H1 (cell line): ENCODE measurements at regions of chr5 and their contacts with region 1.

Region 1: DNA sequence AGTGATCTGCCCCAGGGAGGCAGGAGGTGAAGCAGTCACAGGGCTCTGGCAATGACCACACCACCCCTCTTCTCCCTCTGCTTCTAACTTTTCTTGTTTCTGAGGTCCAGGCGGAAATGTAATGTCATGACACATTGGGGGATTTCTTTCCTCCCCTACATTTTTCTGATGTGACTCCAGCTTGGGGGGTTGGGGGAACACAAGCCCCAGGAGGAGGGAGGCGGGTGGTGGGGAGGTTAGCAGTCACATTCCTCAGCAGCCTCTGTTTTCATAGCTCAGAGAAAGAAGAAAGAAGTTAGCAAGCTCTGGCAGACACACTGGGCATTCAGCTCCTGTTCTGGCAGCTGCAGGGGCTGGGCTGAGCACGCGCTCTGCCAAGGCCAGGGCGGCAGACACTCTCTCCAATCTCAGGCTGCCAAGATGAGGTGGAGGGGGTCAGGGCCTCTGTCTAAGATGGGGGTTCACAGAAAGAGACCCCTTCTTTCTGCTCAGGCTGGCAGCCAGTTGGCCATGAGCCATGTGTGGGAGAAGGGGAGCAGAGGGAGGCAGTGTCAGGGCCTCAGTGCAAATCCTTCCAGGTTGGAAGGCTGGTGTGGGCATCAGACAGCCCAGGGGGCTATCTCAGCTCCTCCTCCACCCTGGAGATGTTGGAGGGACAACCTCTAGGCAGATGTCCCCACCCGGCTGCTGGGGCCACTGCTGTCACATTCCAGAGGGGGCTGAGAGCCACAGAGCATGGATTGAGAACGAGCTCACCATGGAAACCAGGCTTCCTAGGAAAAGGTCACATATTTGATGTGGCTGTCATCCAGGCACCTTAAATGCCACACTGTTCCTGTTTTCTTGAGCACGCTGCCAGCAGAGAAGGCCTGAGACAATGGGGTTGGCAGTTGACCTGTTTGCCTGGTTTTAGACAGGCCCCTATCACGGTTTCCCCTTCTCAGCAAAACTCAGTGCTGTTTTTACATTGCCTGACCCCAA is 20.1 kb upstream of the PFDN1 start:
- DNase-seq: no peak
- H3K4me3 ChIP-seq: no peak overlapping the region
- H3K27ac ChIP-seq: no peak overlapping the region
- H3K4me1 ChIP-seq: peaks cover 0 to 5% (median 0%) of the 10 kb centered on the region in 4 experiments; a peak in 3 of 7 replicates
- H3K27me3 ChIP-seq: no peaks in the 10 kb centered on the region
- CTCF ChIP-seq: no peak
- EP300 ChIP-seq: no peak
- POLR2A ChIP-seq: no peak
- RAD21 ChIP-seq: no peak

Region 2: GRCh38 chr5:140169410-140169809 is 153.6 kb before region 1 on chr5:
- CTCF ChIA-PET with region 1: no interaction called
- POLR2A ChIA-PET with region 1: no interaction called
- DNase-seq: no peak
- H3K4me3 ChIP-seq: no peak overlapping the region
- H3K27ac ChIP-seq: no peak overlapping the region
- H3K4me1 ChIP-seq: peaks cover 0 to under 1% (median 0%) of the 10 kb centered on the region in 4 experiments; a peak in 3 of 7 replicates
- H3K27me3 ChIP-seq: no peaks in the 10 kb centered on the region
- CTCF ChIP-seq: peak in 2 of 3 experiments; percentile 22 to 39; a peak in 2 of 4 replicates
- EP300 ChIP-seq: no peak
- POLR2A ChIP-seq: no peak
- RAD21 ChIP-seq: peak; percentile 16 to 38; a peak in 2 of 4 replicates

Region 3: GRCh38 chr5:140302786-140303639 is 20.0 kb before region 1 on chr5 and contains the start of gene PFDN1:
- CTCF ChIA-PET with region 1: interaction called, 5 read pairs
- POLR2A ChIA-PET with region 1: interaction called, 11 read pairs
- DNase-seq: peak; percentile 83 to 93
- H3K4me3 ChIP-seq: peak within 1 kb of the TSS; percentile 91 to 99 (median 94)
- H3K27ac ChIP-seq: peak within 1 kb of the TSS; percentile 95
- H3K4me1 ChIP-seq: no peaks in the 10 kb centered on the region
- H3K27me3 ChIP-seq: no peaks in the 10 kb centered on the region
- CTCF ChIP-seq: no peak
- EP300 ChIP-seq: no peak
- POLR2A ChIP-seq: peak; percentile 82 to 91
- RAD21 ChIP-seq: no peak
- total RNA-seq, gene PFDN1: 52.6 and 53.0 TPM in 2 replicates